ENCODE measurements at regions of chr1 and their contacts with region 1.

Region 1: DNA sequence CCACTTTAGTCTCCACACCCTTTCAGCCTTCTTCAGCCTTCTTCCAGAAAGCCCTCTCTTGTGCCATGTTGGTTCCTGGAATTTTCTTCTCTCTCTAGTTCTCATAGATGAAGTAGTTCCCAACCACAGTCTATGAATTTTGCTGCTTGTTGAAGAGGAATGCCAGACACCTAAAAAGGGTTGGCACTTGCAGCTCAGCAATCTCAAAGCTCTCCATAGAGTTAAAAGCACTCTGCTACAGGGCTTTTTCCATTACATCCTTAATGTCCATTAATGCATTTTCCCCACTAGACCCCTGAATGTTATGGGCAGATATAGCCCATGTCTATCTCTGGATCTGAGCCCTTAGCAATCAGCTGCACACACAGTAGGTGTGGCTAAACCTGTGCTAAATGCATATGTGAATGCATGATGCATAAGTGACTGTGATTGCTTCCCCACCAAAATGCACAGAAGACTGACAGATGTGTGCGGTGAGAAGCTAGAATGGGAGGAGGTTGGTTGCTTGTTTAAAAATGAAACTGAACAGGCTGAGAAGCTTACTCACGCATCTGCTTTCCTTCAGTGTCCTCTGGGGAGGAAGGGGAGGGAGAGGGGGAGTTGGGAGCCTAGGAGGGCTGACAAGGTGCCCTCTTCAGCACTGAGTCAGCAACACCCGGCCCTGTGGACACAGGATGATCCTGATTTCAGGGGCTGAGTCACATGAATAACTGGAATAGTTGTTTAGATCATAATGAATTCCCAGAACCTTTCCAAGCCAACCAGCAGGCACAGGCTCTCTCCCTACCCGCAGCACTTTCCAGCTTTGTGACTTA is 146.1 kb upstream of the FGGY start:
- DNase-seq: peak; percentile 73 to 95 (median 78)
- ATAC-seq: peak; percentile 88 to 98 (median 96)
- H3K4me3 ChIP-seq: peak overlapping the region in 8 of 12 donors; percentile 16 to 45 (median 28)
- H3K27ac ChIP-seq: peak overlapping the region; percentile 19 to 94 (median 88)
- H3K4me1 ChIP-seq: peaks cover 0 to 49% (median 30%) of the 10 kb centered on the region in 12 donors
- H3K27me3 ChIP-seq: no peaks in the 10 kb centered on the region
- CTCF ChIP-seq: no peak
- POLR2A ChIP-seq: no peak

Region 2: GRCh38 chr1:58688931-58689566 is 461.7 kb before region 1 on chr1:
- intact Hi-C with region 1: no loop called
- DNase-seq: no peak
- ATAC-seq: no peak
- H3K4me3 ChIP-seq: no peak overlapping the region
- H3K27ac ChIP-seq: no peak overlapping the region
- H3K4me1 ChIP-seq: peaks cover 0 to 16% (median 7%) of the 10 kb centered on the region in 12 donors
- H3K27me3 ChIP-seq: no peaks in the 10 kb centered on the region
- CTCF ChIP-seq: no peak
- POLR2A ChIP-seq: no peak

Region 3: DNA sequence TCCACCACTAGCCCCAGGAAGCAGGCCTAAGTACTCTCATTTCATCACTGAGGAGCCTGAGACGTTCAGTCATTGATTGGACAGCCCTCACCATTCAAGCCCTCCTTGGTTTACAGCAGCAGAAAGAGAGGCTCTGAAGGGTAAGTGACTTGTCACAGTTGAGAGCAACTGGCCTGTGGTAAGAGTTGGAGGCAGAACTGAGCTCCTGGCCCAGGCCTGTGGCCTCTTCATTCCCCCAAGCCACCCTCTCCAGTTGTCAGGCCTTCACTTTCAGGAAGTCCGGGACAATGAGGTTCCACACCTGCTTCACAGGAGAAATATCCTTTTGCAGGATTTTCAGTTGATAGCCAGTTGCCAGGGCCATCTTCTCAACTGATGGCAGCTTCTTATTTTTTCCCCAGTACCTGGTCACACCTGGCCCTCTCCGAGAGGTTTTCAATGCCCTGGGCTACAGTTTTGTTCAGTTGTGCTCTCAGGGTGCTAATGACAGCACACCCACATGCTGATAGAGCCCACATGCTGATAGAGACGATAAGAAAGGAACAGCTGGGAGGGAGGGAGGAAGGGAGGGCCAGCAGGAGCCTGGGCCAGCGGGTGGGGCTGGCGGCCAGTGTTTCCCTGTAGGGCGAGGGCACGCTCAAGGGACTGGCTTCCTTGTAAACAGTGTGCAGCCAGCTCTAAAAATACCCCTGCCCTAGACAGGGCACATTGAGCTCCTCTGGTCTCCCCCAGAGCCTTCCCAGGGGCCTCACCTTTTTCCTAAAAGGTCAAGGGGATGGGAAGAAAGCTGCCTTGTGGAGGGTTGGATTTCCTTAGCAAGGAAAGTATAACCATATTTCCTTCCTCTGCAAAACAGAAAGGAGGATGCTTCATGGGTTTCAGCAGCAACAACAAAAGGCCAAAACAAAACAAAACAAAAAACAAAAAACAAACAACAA is 254.3 kb before region 1 on chr1:
- intact Hi-C with region 1: loop called in 5 of 10 experiments (anchors 5 to 10 kb)
- DNase-seq: peak; percentile 64 to 84 (median 80)
- ATAC-seq: peak; percentile 81 to 87 (median 84)
- H3K4me3 ChIP-seq: no peak overlapping the region
- H3K27ac ChIP-seq: peak overlapping the region; percentile 53 to 82 (median 74)
- H3K4me1 ChIP-seq: peaks cover 13 to 83% (median 68%) of the 10 kb centered on the region in 12 donors
- H3K27me3 ChIP-seq: no peaks in the 10 kb centered on the region
- CTCF ChIP-seq: peak in 1 of 12 donors; percentile 30
- POLR2A ChIP-seq: no peak

Region 4: GRCh38 chr1:59046730-59047157 is 104.0 kb before region 1 on chr1:
- intact Hi-C with region 1: loop called in 1 of 10 experiments (anchors 1 kb)
- DNase-seq: no peak
- ATAC-seq: no peak
- H3K4me3 ChIP-seq: no peak overlapping the region
- H3K27ac ChIP-seq: peak overlapping the region in 1 of 12 donors; percentile 67
- H3K4me1 ChIP-seq: peaks cover 0 to 47% (median 16%) of the 10 kb centered on the region in 12 donors
- H3K27me3 ChIP-seq: no peaks in the 10 kb centered on the region
- CTCF ChIP-seq: peak in 1 of 12 donors; percentile 10
- POLR2A ChIP-seq: no peak

Region 5: DNA sequence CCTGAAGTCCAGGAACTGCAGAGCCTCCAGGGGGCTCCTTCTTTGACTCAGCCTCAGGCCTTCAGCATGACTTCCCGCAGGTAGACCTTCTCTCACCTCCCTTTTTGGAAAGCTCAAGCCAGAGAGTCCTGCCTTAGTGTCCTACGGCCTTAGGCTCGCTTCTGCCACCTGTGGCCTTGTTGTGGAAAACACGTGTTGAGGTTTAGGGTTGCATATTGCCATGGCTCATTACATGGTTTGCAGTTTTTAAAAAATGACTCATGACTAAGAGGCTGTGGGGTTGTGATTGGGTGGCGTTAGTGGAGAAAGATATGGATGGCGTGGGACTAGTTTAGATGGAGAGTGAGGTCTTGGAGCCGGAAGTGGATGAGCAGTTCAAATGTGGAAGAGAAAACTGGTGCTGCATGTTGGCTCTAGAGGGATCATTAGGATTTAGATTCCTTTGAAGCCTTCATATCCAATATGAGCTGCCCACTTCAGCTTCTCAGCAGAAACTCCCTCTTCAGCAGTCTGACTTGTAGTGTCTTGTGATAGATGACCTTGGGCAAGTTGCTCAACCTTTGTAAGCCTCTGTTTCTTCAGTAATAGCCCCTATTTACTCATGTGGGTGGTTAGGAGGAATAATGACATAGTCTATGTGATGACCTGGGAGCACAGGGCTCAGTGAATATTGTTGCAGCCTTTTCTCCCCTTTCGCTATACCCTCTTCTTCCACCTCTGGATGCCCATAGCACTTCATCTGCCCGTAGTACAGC is 139.6 kb after region 1 on chr1:
- intact Hi-C with region 1: loop called in 4 of 10 experiments (anchors 5 kb)
- DNase-seq: peak in 2 of 5 donors; percentile 27 to 43
- ATAC-seq: peak; percentile 18 to 60 (median 58)
- H3K4me3 ChIP-seq: no peak overlapping the region
- H3K27ac ChIP-seq: peak overlapping the region in 1 of 12 donors; percentile 83
- H3K4me1 ChIP-seq: peaks cover 0 to 41% (median 1%) of the 10 kb centered on the region in 12 donors
- H3K27me3 ChIP-seq: no peaks in the 10 kb centered on the region
- CTCF ChIP-seq: peak in 11 of 12 donors; percentile 17 to 55 (median 27)
- POLR2A ChIP-seq: no peak

Region 6: GRCh38 chr1:59699227-59699847 is 548.6 kb after region 1 on chr1:
- intact Hi-C with region 1: loop called in 5 of 10 experiments (anchors 5 to 10 kb)
- DNase-seq: no peak
- ATAC-seq: peak in 1 of 4 donors; percentile 41
- H3K4me3 ChIP-seq: no peak overlapping the region
- H3K27ac ChIP-seq: peak overlapping the region in 2 of 12 donors; percentile 19 to 23
- H3K4me1 ChIP-seq: peaks cover 0 to 54% (median 17%) of the 10 kb centered on the region in 12 donors
- H3K27me3 ChIP-seq: no peaks in the 10 kb centered on the region
- CTCF ChIP-seq: peak; percentile 86 to 97 (median 94)
- POLR2A ChIP-seq: no peak

Region 7: GRCh38 chr1:59759156-59759925 is 608.6 kb after region 1 on chr1:
- intact Hi-C with region 1: loop called in 1 of 10 experiments (anchors 10 kb)
- DNase-seq: peak; percentile 79 to 89 (median 80)
- ATAC-seq: peak; percentile 83 to 96 (median 94)
- H3K4me3 ChIP-seq: peak overlapping the region in 9 of 12 donors; percentile 22 to 46 (median 37)
- H3K27ac ChIP-seq: peak overlapping the region in 9 of 12 donors; percentile 14 to 79 (median 53)
- H3K4me1 ChIP-seq: peaks cover 0 to 14% (median 5%) of the 10 kb centered on the region in 12 donors
- H3K27me3 ChIP-seq: no peaks in the 10 kb centered on the region
- CTCF ChIP-seq: peak; percentile 91 to 99 (median 94)
- POLR2A ChIP-seq: no peak

Measured in heart left ventricle (tissue), 16 donors.